GM10248 (cell line): ENCODE measurements at regions of chr5 and their contacts with region 1.

Region 1: GRCh38 chr5:160467555-160468362 is 46.1 kb downstream of the PTTG1 start:
- DNase-seq: peak; percentile 86
- CTCF ChIP-seq: no peak

Region 2: GRCh38 chr5:160479926-160480325 is 12.2 kb after region 1 on chr5:
- CTCF ChIA-PET with region 1: interaction called, 11 read pairs
- POLR2A ChIA-PET with region 1: interaction called, 4 read pairs
- DNase-seq: no peak
- CTCF ChIP-seq: no peak